Activated CD8-positive, alpha-beta T cell treated with anti-CD3 and anti-CD28 coated beads, Interleukin-2, amount 10 ng/mL, durations not matched to agents 7 days and 5 days (primary cell): ENCODE measurements at regions of chr4 and their contacts with region 1.

Region 1: GRCh38 chr4:6942238-6942800 is 32.7 kb downstream of the TBC1D14 start:
- DNase-seq: peak; percentile 64
- ATAC-seq: peak; percentile 73
- H3K4me3 Mint-ChIP-seq: peak overlapping the region; percentile 62
- H3K27ac Mint-ChIP-seq: peak overlapping the region; percentile 88
- H3K4me1 Mint-ChIP-seq: peaks cover 50% of the 10 kb centered on the region
- H3K27me3 Mint-ChIP-seq: no peaks in the 10 kb centered on the region

Region 2: GRCh38 chr4:6917461-6918271 is 24.7 kb before region 1 on chr4:
- CTCF ChIA-PET with region 1: interaction called, 17 read pairs
- POLR2A ChIA-PET with region 1: no interaction called
- DNase-seq: peak; percentile 66
- ATAC-seq: peak; percentile 61
- H3K4me3 Mint-ChIP-seq: peak overlapping the region; percentile 62
- H3K27ac Mint-ChIP-seq: peak overlapping the region; percentile 92
- H3K4me1 Mint-ChIP-seq: peaks cover 58% of the 10 kb centered on the region
- H3K27me3 Mint-ChIP-seq: no peaks in the 10 kb centered on the region

Region 3: GRCh38 chr4:6926681-6927478 is 15.4 kb before region 1 on chr4:
- CTCF ChIA-PET with region 1: interaction called, 12 read pairs
- POLR2A ChIA-PET with region 1: interaction called, 3 read pairs
- DNase-seq: peak; percentile 72
- ATAC-seq: peak; percentile 87
- H3K4me3 Mint-ChIP-seq: peak overlapping the region; percentile 44
- H3K27ac Mint-ChIP-seq: peak overlapping the region; percentile 65
- H3K4me1 Mint-ChIP-seq: peaks cover 58% of the 10 kb centered on the region
- H3K27me3 Mint-ChIP-seq: no peaks in the 10 kb centered on the region

Region 4: DNA sequence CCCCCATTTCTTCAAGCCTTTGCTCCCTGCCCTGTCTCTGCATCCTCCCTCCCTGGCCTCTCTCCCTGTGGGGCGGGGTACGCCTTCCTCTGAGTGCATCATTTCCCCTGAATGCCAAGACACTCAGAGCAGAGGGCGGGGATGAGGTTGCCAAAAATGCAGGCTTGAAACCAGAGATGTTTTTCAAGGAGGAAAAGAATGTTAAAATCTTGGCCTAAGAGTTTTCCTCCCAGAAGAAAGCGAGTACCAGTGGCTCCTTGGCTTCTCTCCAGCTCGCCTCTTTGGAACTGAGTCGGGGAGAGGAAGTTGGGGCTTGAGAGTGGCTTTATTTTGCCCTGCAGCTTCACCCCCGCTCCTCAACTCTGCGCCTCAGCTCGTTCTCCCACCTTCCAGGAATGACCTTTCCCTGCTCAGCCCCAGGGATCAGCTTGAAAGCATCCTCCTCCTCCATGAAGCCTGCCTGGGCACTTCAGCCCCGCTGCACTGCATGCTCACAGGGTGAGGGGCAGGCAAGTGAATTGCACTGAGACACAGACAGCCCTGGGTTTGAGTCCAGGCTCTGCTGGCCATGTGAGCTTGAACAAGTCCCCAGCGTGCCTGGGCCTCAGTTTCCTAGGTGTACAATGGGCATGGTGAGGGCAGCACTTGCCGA is 192.5 kb after region 1 on chr4:
- CTCF ChIA-PET with region 1: no interaction called
- POLR2A ChIA-PET with region 1: no interaction called
- DNase-seq: no peak
- ATAC-seq: no peak
- H3K4me3 Mint-ChIP-seq: no peak overlapping the region
- H3K27ac Mint-ChIP-seq: no peak overlapping the region
- H3K4me1 Mint-ChIP-seq: peaks cover 2% of the 10 kb centered on the region
- H3K27me3 Mint-ChIP-seq: no peaks in the 10 kb centered on the region